K562 (cell line): ENCODE measurements at regions of chr10 and their contacts with region 1.

Region 1: DNA sequence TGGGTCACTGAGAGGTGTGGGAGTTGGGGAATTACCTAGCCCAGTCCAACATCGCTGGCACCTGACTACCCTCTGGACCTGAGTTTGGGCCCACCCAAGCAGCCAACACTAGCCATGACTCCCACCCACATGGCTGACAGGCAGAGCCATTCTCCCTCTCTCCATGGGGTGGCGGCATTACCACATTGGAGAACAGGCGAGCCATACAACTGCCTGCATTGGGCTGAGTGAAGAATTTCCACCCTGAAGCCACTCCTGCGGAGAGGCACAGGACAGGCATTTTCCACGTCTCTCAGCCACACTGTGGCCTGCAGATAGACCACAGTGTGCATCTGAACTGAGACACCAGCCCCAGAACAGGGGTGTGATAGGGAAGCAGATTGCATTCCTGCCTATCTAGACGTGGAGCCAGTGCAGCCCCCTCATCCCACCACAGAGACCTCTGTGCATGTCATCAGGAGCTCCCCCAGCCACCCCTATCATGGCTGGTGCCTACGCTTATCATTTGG is 58.2 kb upstream of the ANTXRL start:
- DNase-seq: peak; percentile 77 to 83 (median 80)
- ATAC-seq: peak; percentile 96
- H3K4me3 ChIP-seq: no peak overlapping the region
- H3K27ac ChIP-seq: no peak overlapping the region
- H3K4me1 ChIP-seq: peaks cover 0 to 6% of the 10 kb centered on the region in 2 experiments; a peak in 2 of 5 replicates
- H3K27me3 ChIP-seq: peaks cover 0 to 14% of the 10 kb centered on the region in 2 experiments; a peak in 1 of 5 replicates
- CTCF ChIP-seq: peak; percentile 96 to 97 (median 97)
- EP300 ChIP-seq: no peak
- POLR2A ChIP-seq: no peak
- RAD21 ChIP-seq: peak; percentile 89 to 97

Region 2: GRCh38 chr10:46030091-46030937 is 198.3 kb before region 1 on chr10 and contains the start of gene NCOA4:
- CTCF ChIA-PET with region 1: no interaction called
- POLR2A ChIA-PET with region 1: no interaction called
- in situ Hi-C with region 1: no loop called
- intact Hi-C with region 1: loop called (anchors 5 kb)
- DNase-seq: peak; percentile 99 to 100 (median 99)
- ATAC-seq: peak; percentile 95
- H3K4me3 ChIP-seq: peak within 1 kb of the TSS; percentile 85
- H3K27ac ChIP-seq: peak within 1 kb of the TSS; percentile 92
- H3K4me1 ChIP-seq: peaks cover 26 to 60% of the 10 kb centered on the region in 2 experiments
- H3K27me3 ChIP-seq: no peaks in the 10 kb centered on the region
- CTCF ChIP-seq: peak; percentile 71 to 96 (median 91)
- EP300 ChIP-seq: no peak
- POLR2A ChIP-seq: peak; percentile 97
- RAD21 ChIP-seq: peak; percentile 34 to 42
- polyA plus RNA-seq, gene NCOA4: 126 to 196 TPM

Region 3: DNA sequence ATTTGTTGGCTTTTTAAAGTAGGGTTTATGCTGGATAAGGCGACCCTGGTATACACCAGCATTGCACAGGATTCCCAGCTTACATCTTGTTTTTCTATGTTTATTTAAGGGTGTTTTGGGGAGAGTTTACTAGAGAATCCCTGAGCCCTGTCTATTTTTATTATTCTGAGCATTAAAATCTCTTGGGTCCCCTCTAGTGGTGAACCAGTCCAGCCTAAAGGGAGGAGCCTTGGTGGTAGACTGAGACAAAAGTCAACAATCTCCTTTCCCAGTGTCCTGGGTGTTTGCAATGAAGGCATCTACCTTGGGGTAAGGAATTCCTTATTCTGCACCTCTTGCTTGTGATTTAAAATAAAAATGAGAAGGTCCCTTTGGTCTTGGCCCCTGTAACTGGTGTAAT is 96.4 kb after region 1 on chr10:
- CTCF ChIA-PET with region 1: no interaction called
- POLR2A ChIA-PET with region 1: no interaction called
- in situ Hi-C with region 1: no loop called
- intact Hi-C with region 1: loop called (anchors 5 kb)
- DNase-seq: peak in 3 of 4 experiments; percentile 41 to 48 (median 48)
- ATAC-seq: peak; percentile 72
- H3K4me3 ChIP-seq: no peak overlapping the region
- H3K27ac ChIP-seq: no peak overlapping the region
- H3K4me1 ChIP-seq: no peaks in the 10 kb centered on the region
- H3K27me3 ChIP-seq: peaks cover 0 to 33% of the 10 kb centered on the region in 2 experiments; a peak in 2 of 5 replicates
- CTCF ChIP-seq: peak; percentile 40 to 59 (median 40); a peak in 3 of 6 replicates
- EP300 ChIP-seq: no peak
- POLR2A ChIP-seq: no peak
- RAD21 ChIP-seq: peak; percentile 20 to 50